Tibial artery (tissue), 4 donors: ENCODE measurements at regions of chr3 and their contacts with region 1.

Region 1: GRCh38 chr3:151999936-152000335 is 126.5 kb downstream of the SUCNR1 start:
- DNase-seq: no peak
- H3K4me3 ChIP-seq: no peak overlapping the region
- H3K27ac ChIP-seq: no peak overlapping the region
- H3K4me1 ChIP-seq: no peaks in the 10 kb centered on the region
- H3K27me3 ChIP-seq: no peaks in the 10 kb centered on the region
- CTCF ChIP-seq: no peak

Region 2: DNA sequence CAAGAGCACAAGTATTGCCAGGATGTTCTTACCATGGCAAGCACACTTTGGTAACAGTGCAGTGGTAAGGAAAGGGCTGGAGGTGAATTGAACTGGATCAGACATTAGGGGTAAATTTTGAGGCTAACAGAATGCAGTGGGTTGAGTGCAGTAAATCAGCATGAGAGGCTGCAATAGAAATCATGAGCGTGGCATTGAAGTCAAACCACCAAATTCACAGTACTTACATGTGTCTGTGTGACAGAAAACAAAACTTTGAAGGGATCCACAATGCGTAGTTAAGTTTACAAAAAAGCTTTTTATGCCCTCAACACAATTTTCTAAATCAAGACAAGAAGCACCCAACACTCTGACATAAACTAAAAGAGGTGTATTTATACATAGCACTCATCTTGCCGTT is 1693.3 kb after region 1 on chr3:
- intact Hi-C with region 1: loop called (anchors 5 kb)
- DNase-seq: no peak
- H3K4me3 ChIP-seq: no peak overlapping the region
- H3K27ac ChIP-seq: no peak overlapping the region
- H3K4me1 ChIP-seq: no peaks in the 10 kb centered on the region
- H3K27me3 ChIP-seq: no peaks in the 10 kb centered on the region
- CTCF ChIP-seq: no peak